ENCODE measurements at regions of chr14 and their contacts with region 1.

Region 1: DNA sequence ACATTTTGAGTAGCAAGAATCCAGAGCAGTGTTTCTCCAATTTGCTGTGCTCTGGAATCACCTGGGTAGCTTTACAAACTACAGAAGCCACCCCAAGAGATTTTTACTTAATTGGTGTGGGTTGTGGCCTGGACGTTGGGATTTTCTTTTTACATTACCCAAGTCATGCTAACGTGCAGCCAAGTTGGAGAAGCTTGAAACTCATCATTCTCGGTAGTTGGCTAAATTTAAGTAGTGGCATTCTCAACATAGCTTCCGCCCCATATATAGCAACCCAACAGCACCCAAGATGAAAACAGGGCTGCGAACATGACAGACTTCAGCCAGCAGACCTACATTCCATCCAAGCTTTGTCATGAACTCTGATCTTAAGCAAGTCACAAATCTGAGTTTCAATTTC is 25.0 kb downstream of the DAD1 start:
- DNase-seq: no peak
- H3K4me3 ChIP-seq: no peak overlapping the region
- H3K27ac ChIP-seq: no peak overlapping the region
- H3K4me1 ChIP-seq: peaks cover 48% of the 10 kb centered on the region
- H3K27me3 ChIP-seq: no peaks in the 10 kb centered on the region
- CTCF ChIP-seq: no peak

Region 2: DNA sequence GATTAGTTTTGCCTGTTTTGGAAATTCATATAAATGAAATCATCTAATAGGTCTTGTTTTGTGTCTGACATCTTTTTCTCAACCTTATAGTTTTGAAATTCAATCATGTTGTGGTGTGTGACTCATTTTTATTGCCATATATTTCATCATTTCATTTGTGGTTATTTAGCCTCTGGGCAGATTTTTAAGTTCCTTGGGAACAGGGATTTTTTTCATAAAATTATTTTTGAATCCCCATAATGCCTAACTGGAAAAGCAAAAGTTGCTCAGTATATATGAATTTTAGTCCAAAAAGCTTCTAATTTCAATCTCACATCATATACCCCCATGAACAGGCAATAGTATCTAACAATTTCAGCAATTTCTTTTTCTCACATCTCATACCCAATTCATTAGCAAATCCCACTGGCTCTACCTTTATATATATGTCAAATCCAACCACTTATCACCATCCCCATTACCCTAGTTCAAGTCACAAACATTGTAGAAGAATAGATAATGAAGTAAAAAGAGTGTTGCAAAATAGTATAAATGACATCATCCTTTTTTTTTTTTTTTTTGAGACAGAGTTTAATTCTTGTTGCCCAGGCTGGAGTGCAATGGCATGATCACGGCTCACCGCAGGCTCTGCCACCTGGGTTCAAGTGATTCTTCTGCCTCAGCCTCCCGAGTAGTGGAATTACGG is 82.7 kb after region 1 on chr14:
- CTCF ChIA-PET with region 1: interaction called, 10 read pairs
- POLR2A ChIA-PET with region 1: no interaction called
- intact Hi-C with region 1: no loop called
- DNase-seq: no peak
- H3K4me3 ChIP-seq: no peak overlapping the region
- H3K27ac ChIP-seq: no peak overlapping the region
- H3K4me1 ChIP-seq: peaks cover 10% of the 10 kb centered on the region
- H3K27me3 ChIP-seq: no peaks in the 10 kb centered on the region
- CTCF ChIP-seq: no peak